GM10248 (cell line): ENCODE measurements at regions of chr7 and their contacts with region 1.

Region 1: DNA sequence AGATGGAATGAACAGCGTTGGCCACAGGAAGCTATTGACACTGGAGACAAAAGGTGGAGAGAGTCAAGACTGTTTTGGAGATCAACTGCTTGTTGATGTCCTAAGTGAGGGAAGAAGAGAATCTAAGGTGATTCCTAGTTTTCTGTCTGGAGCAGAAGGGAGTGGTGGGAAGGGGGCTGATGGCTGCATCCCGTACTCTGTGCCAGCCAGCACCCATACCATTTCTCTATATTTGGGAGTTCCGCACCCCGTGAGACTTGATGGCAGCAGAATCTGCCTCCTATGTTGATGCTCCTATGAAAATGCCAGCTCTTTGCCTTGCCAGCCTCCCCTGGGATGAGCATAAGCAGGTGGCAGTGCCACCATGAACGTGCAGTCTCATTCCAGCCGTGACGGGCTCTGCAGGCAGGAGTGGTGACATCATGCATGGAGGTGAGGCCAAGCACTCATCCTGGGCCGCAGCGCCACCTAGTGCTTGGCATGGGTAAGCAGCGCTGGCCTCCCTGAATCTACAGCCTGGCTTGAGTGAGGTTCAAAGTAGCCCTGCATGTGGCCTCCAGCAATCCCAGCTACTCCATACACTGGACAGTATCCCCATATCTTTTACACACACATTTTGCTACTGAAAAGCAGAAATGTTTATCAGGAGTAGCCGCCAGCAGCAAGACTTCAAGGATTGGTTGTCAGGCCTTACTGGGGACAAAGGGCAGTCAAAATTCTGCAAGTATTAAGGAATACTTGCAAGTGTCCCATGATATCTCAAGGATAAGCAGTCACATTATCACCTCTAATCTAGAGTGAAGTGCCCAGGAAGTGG is 43.0 kb downstream of the PODXL start:
- DNase-seq: peak; percentile 85
- CTCF ChIP-seq: peak; percentile 100

Region 2: DNA sequence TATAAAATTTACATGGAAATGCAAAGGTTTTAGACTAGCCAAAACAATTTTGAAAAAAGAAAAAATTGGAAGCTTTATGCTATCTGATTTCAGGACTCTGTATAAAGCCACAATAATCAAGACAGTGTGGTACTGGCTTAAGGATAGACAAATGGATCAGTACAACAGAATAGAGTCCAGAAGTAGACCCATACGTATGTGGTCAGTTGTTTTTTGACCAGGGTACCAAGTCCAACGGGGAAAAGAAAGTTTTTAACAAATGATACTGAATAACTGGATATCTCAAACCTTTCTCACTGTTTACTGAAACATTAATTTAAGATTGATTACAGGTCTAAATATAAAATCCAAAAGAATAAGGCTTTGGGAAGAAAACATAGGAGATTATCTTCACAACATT is 36.7 kb before region 1 on chr7:
- CTCF ChIA-PET with region 1: no interaction called
- POLR2A ChIA-PET with region 1: no interaction called
- DNase-seq: no peak
- CTCF ChIP-seq: no peak

Region 3: DNA sequence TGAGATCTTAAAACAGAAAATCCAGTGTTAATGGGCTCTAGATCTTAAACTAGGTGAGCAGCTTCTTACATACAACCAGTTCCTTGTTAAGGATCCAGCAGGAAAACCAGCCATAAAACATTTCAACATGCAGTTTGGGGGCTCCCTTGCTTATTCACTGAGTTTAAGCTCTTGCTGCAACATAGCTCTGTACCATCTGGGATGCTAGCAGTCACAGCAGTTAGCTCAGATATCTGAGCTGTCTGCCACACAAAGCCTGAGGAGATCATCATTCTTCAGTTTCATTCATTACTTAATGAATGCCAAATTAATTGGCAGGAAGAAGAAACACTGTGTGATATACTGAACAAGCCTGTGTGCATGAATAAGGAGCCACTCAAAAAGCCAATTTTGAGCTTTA is 19.9 kb before region 1 on chr7:
- CTCF ChIA-PET with region 1: interaction called, 21 read pairs
- POLR2A ChIA-PET with region 1: no interaction called
- DNase-seq: no peak
- CTCF ChIP-seq: no peak

Region 4: DNA sequence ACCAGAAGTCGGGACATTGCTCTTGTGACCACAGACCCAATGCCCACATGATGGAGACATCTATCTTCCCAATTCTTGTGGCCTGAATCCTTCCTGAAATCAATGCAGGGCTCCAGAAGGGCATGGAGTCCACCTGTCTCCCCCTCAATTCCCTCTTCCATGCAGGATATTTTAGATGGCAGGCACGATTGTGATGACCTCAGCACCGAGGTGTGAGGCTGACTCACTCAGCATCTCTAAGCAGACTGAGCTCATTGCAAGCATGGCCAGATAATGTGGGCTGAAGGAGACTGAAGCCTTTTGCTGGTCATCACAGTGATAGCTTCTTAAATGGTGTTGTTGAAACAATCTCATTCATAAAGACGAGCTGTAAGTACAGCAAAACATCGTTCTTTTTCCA is 417.9 kb after region 1 on chr7:
- CTCF ChIA-PET with region 1: no interaction called
- POLR2A ChIA-PET with region 1: no interaction called
- DNase-seq: no peak
- CTCF ChIP-seq: no peak

Region 5: GRCh38 chr7:132084776-132085388 is 571.4 kb after region 1 on chr7:
- CTCF ChIA-PET with region 1: no interaction called
- POLR2A ChIA-PET with region 1: no interaction called
- DNase-seq: no peak
- CTCF ChIP-seq: no peak